Activated CD4-positive, alpha-beta memory T cell treated with anti-CD3 and anti-CD28 coated beads, Interleukin-2, amount 10 ng/mL, durations not matched to agents 7 days and 5 days (primary cell): ENCODE measurements at regions of chr1 and their contacts with region 1.

Region 1: DNA sequence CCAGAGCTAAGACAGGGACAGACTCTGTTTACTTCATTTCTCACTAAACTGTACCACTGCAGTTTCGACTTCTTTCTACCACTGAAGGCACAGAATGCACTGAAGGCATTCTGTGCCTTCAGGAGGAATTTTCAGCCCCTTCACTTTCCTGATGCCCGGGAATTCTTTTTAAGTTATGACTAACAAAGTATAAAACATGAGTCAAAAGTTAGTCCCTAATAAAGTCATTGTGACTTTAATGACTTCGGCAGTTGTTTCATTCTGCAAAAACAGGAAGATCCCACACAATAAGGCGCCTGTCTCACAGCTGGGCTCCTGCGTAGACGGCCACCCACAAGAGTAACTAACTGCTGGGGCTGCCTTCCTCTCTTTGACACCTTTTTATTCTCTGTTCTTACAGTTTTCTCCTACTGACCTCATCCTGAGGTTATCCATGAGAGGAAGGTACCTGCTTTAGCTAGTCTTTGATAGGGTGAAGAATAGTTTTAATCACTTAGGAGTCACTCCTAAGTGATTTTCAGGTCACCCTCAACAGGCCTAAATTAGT is 183.9 kb upstream of the SGIP1 start:
- DNase-seq: peak; percentile 55
- H3K4me3 Mint-ChIP-seq: peak overlapping the region; percentile 66
- H3K27ac Mint-ChIP-seq: peak overlapping the region; percentile 80
- H3K4me1 Mint-ChIP-seq: peaks cover 94% of the 10 kb centered on the region
- H3K27me3 Mint-ChIP-seq: no peaks in the 10 kb centered on the region

Region 2: DNA sequence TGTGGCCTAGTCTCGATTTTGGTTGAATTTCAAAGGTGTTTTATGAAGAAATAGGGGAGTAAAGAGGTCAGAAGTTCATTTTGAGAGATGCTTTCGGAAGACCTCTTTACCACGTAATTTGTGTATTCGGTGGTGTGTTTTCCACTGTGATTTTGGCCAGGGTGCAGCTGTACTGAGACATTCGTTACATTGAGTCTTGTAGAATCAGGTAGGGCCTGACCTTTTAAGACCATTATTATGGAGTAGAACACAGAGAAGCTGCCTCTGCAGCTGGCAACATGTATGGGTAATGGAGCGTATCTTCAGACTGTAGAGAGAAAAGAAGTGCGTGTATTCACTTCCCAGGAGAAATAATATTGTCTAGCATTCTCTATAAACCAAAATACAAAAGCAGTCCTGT is 230.9 kb before region 1 on chr1:
- CTCF ChIA-PET with region 1: no interaction called
- POLR2A ChIA-PET with region 1: no interaction called
- DNase-seq: no peak
- H3K4me3 Mint-ChIP-seq: no peak overlapping the region
- H3K27ac Mint-ChIP-seq: no peak overlapping the region
- H3K4me1 Mint-ChIP-seq: no peaks in the 10 kb centered on the region
- H3K27me3 Mint-ChIP-seq: peaks cover 11% of the 10 kb centered on the region

Region 3: GRCh38 chr1:66258404-66259105 is 91.5 kb before region 1 on chr1:
- CTCF ChIA-PET with region 1: interaction called, 10 read pairs
- POLR2A ChIA-PET with region 1: interaction called, 6 read pairs
- DNase-seq: no peak
- H3K4me3 Mint-ChIP-seq: no peak overlapping the region
- H3K27ac Mint-ChIP-seq: peak overlapping the region; percentile 21
- H3K4me1 Mint-ChIP-seq: peaks cover 74% of the 10 kb centered on the region
- H3K27me3 Mint-ChIP-seq: no peaks in the 10 kb centered on the region

Region 4: DNA sequence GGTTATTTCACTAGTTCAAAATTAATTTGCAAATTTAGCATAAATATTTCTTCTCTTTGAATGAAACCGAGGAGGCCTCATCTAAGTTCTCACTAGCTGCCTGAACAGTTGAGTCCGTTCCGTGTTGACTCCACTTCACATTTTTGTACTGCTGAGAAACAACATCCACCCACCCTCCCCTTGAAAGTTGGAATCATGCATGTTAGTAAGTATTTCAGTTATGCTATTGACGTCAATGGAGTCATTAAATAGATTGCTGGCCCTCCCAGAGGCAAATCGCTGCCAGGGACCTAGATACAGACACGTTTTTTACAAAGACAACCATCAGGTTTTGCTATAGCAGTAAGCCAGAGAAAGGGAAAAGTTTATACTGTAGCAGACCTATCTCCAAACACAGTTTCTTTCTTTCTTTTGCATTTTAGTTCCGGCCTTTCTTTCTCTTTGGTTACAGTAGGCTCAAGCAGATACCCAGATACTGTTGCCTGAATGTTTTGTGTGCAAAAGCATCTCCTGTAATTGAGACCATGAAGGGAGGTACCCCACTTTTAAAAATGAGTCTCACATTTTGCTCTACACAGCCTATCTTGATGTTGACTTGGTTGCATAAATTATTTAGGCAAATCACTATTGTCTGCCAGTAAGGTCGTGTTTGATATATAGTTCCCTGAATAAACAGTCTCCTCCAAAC is 78.7 kb before region 1 on chr1:
- CTCF ChIA-PET with region 1: interaction called, 4 read pairs
- POLR2A ChIA-PET with region 1: interaction called, 22 read pairs
- DNase-seq: peak; percentile 34
- H3K4me3 Mint-ChIP-seq: no peak overlapping the region
- H3K27ac Mint-ChIP-seq: peak overlapping the region; percentile 57
- H3K4me1 Mint-ChIP-seq: peaks cover 61% of the 10 kb centered on the region
- H3K27me3 Mint-ChIP-seq: peaks cover 2% of the 10 kb centered on the region

Region 5: DNA sequence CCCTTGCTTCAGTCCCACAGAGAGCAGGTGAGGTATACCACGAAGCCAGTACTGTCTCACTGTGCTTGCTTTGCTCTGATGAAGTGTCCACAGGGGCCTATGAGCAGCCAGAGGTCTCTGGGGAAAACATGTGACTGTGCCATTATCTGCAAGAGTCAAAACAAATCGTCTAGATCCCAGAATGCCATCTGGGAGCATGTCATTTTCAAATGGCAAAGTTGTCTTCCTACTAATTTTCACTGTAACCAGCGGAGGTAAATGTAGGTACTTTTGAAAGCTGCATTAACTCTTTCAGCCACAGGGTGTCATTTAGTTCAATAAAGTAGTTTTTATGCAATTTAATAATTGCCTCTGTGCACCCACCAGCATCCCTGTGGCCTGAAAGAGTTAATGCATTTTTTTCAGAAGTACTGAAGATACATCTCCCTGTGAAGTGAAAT is 10.2 kb after region 1 on chr1:
- CTCF ChIA-PET with region 1: interaction called, 6 read pairs
- POLR2A ChIA-PET with region 1: interaction called, 15 read pairs
- DNase-seq: no peak
- H3K4me3 Mint-ChIP-seq: no peak overlapping the region
- H3K27ac Mint-ChIP-seq: no peak overlapping the region
- H3K4me1 Mint-ChIP-seq: peaks cover 85% of the 10 kb centered on the region
- H3K27me3 Mint-ChIP-seq: no peaks in the 10 kb centered on the region

Region 6: DNA sequence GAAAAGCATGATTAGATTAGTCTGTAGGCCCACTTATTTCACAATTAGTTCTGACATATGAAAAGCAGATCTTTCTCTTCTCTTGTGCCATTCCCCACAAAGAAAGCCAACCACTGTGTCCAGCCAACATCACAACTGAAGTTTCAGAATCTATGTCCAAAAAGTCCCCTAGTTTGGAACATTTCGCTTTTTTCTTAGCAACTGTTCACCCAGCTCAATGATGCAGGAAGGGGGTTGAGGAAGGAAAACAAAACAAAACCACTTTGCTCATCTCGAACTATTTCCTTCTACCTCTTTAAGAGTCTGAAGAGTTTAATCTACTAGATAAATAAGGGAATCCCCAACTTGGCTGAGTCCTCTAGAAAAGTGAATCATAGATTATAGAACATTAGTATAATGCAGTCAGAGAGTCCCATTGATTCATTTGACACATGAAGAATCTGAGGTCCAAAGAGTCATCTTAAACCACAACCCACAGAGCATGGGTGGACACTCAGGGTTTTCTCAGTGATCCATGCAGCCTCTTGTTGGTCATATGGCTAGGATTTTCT is 24.6 kb after region 1 on chr1:
- CTCF ChIA-PET with region 1: interaction called, 9 read pairs
- POLR2A ChIA-PET with region 1: interaction called, 44 read pairs
- DNase-seq: peak; percentile 33
- H3K4me3 Mint-ChIP-seq: peak overlapping the region; percentile 49
- H3K27ac Mint-ChIP-seq: peak overlapping the region; percentile 87
- H3K4me1 Mint-ChIP-seq: peaks cover 62% of the 10 kb centered on the region
- H3K27me3 Mint-ChIP-seq: no peaks in the 10 kb centered on the region

Region 7: DNA sequence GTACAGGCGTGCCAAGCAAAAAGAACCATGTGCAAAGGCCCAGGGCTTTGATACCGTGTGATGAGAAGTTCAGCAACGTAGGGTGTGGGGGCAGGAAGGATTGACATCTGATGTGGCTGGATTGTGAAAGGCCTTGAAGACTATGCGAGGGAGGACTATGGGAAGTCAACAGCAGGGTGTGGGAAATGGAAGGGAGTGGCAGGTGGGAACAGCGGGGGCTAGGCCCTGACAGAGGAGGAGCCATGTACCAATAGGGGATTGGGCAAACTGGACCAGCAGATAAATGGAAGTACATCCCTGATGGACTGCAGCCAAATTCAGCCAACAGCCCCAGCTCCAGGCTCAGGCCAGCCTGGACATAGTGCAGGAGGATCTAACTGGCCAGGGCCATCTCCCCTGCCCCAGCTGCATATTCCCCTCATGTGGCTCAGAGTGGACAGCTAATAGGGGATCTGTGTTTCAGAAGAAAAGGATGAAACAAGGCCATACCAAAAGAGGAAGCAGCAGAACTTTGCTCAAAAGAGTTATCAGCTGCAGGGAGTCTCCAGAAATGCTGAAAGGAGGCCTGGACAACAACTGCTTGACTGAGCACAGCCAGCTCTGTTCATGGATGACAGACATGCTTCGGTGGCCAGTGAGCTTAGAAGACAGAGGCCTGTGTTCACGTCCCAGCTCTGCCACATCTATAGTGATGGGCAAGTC is 43.7 kb after region 1 on chr1:
- CTCF ChIA-PET with region 1: no interaction called
- POLR2A ChIA-PET with region 1: no interaction called
- DNase-seq: no peak
- H3K4me3 Mint-ChIP-seq: no peak overlapping the region
- H3K27ac Mint-ChIP-seq: no peak overlapping the region
- H3K4me1 Mint-ChIP-seq: peaks cover 8% of the 10 kb centered on the region
- H3K27me3 Mint-ChIP-seq: no peaks in the 10 kb centered on the region